Endothelial cell of umbilical vein (primary cell): ENCODE measurements at regions of chrX and their contacts with region 1.

Region 1: GRCh38 chrX:3037218-3037617 is 4.1 kb upstream of the ARSF start:
- DNase-seq: no peak
- H3K4me3 ChIP-seq: no peak overlapping the region
- H3K27ac ChIP-seq: no peak overlapping the region
- H3K4me1 ChIP-seq: no peaks in the 10 kb centered on the region
- H3K27me3 ChIP-seq: no peaks in the 10 kb centered on the region
- CTCF ChIP-seq: no peak
- POLR2A ChIP-seq: no peak

Region 2: DNA sequence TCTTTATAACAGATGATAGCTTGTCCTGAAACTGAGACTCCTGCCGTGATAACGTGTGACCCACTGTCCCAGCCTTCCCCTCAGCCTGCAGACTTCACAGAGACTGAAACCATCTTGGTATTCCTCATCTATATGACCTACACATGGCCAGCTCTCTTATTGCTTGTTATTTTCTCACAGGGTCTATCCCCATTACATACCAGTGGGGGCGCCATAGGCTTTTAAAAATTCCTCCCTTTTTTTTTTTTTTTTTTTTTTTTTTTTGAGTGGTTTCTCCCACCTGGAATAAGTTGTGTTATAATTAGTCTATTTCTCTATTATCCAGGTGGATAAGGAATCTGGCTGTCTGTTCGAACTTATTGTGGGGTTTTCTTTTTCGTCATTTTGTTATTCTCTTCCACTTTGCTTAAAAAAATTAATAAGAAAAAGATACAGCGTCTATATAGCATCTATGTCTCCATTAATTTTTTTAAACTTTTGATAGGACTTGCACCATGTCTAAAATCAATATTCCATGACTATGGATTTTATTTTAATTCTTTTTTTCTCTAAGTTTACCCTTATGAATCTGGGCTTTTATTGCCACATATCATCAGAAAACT is 161.3 kb before region 1 on chrX:
- CTCF ChIA-PET with region 1: interaction called, 3 read pairs
- POLR2A ChIA-PET with region 1: no interaction called
- dilution Hi-C with region 1: no loop called
- intact Hi-C with region 1: loop called (anchors 5 kb)
- DNase-seq: no peak
- H3K4me3 ChIP-seq: no peak overlapping the region
- H3K27ac ChIP-seq: no peak overlapping the region
- H3K4me1 ChIP-seq: no peaks in the 10 kb centered on the region
- H3K27me3 ChIP-seq: no peaks in the 10 kb centered on the region
- CTCF ChIP-seq: peak; percentile 23 to 40
- POLR2A ChIP-seq: no peak